ENCODE measurements at regions of chr17 and their contacts with region 1.

Region 1: DNA sequence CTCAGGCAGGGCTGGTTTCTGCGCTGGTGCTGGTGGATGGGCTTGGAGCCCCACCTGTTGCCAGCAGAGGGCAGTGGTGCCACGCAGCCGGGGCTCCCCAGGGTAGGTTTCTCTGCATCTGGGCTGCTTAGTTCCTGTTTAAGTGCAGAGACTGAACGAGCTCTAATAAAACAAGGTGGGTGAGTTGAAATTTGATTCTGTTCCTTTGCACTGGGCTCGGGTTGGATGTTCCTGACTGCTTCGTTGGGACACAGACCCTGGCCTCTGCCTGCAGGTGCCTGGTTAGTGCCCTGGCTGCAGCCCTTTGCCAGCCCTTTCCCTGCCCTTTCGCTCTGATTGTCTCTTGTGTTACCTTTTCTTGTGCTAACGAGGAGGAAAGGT is 30.0 kb downstream of the TBCD start:
- DNase-seq: peak; percentile 61 to 92 (median 84)

Region 2: GRCh38 chr17:82917691-82918345 is 135.9 kb after region 1 on chr17:
- intact Hi-C with region 1: loop called (anchors 10 kb)
- DNase-seq: peak in 1 of 42 donors; percentile 28

Measured in head of caudate nucleus (tissue), 42 donors.